AG04449 (cell line): ENCODE measurements at regions of chr1 and their contacts with region 1.

Region 1: DNA sequence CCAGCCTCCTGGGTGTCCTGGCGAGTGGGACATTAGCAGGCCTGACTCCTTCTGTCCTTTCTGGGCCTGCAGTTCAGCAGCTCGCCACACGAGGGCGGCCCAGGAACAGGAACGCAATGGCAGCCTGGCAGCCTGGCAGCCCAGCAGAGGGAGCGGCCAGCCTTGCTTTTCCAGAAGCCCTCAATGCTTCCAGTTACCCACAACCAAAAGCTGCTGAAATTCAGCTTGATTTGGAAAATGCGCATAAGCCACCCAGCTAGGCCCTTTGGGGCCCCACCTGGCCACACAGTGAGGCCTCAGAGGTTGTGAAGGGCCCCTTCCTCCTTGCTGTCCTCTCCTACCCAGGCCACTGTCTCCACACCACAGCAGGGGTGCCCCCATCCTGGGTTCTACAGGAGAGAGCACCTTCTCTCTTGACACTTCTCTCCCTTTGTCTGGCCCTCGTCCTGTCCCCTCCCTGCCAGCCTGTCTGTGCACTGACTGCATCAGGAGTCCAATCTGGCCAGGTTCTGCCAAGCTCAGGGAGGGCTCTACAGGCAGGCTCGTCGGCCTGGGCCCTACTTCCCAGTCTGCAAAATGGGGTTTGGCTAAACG is 103.4 kb upstream of the VAMP3 start:
- DNase-seq: no peak
- H3K4me3 ChIP-seq: no peak overlapping the region
- CTCF ChIP-seq: peak; percentile 100

Region 2: GRCh38 chr1:7646981-7647901 is 20.5 kb before region 1 on chr1:
- CTCF ChIA-PET with region 1: interaction called, 62 read pairs
- POLR2A ChIA-PET with region 1: no interaction called
- DNase-seq: no peak
- H3K4me3 ChIP-seq: no peak overlapping the region
- CTCF ChIP-seq: peak; percentile 90

Region 3: GRCh38 chr1:7698641-7699040 is 30.9 kb after region 1 on chr1:
- CTCF ChIA-PET with region 1: interaction called, 52 read pairs
- POLR2A ChIA-PET with region 1: no interaction called
- DNase-seq: no peak
- H3K4me3 ChIP-seq: no peak overlapping the region
- CTCF ChIP-seq: no peak

Region 4: DNA sequence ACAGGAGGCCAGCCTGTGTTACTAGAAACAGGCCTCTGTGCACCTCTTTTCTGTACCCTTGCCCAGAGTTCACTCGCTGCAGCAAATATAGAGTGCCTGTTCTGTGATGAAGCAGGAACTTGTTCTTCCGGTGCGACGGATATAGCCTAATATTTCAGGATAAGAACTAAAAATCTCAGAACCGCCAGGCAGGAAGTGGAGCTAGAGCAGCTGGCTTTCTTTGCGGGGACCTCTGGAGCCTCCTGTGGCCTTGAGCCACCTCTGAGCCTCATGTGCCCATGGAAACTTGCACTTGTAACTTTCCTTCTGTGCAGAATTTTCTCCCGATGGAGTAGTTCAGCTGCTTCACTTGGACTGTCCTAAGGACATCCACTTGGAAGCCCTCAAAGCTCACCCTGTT is 58.9 kb after region 1 on chr1:
- CTCF ChIA-PET with region 1: interaction called, 15 read pairs
- POLR2A ChIA-PET with region 1: no interaction called
- DNase-seq: no peak
- H3K4me3 ChIP-seq: no peak overlapping the region
- CTCF ChIP-seq: no peak

Region 5: DNA sequence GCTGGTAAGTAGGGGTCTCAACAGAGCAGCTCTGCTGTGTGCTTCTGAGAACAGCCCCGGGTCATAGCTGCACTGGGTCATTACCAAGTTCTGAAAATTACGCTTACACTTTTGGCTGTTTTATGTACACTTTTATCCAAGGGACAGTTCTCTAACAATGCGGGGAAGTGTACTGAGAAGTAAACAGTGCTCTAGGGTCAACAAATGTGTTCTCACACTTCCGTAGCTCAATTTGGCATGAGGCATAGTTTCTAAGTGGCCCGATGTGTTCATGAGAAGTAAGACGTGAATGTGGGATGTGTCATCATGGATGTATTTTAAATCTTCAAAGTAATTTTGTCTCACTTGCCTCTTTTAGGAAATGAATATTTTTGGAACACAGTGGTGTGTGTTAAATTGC is 92.5 kb after region 1 on chr1:
- CTCF ChIA-PET with region 1: interaction called, 1,214 read pairs
- POLR2A ChIA-PET with region 1: interaction called, 4 read pairs
- DNase-seq: no peak
- H3K4me3 ChIP-seq: no peak overlapping the region
- CTCF ChIP-seq: no peak

Region 6: GRCh38 chr1:7902478-7903085 is 234.9 kb after region 1 on chr1:
- CTCF ChIA-PET with region 1: interaction called, 108 read pairs
- POLR2A ChIA-PET with region 1: interaction called, 3 read pairs
- DNase-seq: no peak
- H3K4me3 ChIP-seq: no peak overlapping the region
- CTCF ChIP-seq: peak; percentile 82

Region 7: DNA sequence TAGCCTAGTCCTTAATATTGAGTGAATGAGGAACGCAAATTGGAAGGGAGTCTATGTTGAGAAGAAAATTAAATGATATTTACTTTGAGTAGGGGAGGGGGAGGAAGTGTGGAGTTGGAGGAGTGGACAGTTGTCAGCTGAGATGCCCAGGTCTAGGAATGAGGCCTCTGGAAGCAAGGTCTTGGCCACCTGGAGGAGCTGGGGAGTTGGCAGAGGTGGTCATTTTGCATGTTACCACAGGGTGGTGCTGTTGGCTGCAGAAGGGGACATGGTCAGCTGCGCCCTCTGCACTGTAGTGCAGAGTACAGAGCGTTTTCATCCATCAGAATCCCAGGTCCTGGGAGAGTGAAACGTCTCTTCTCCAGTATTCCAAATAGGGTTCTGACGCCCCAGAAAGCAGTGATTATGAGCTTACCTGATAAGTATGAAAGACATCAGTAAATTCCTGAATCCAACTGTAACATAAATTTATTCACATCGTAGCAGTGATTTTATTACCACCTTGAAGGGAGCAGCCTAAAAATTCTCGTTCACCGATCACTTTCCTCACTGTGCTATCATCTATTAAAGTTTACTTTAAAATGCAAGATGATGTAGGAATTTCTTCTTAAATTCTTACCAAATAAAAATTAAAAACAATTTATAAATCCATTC is 307.6 kb after region 1 on chr1:
- CTCF ChIA-PET with region 1: interaction called, 12 read pairs
- POLR2A ChIA-PET with region 1: no interaction called
- DNase-seq: no peak
- H3K4me3 ChIP-seq: no peak overlapping the region
- CTCF ChIP-seq: peak; percentile 90